ENCODE measurements at regions of chr5 and their contacts with region 1.

Region 1: DNA sequence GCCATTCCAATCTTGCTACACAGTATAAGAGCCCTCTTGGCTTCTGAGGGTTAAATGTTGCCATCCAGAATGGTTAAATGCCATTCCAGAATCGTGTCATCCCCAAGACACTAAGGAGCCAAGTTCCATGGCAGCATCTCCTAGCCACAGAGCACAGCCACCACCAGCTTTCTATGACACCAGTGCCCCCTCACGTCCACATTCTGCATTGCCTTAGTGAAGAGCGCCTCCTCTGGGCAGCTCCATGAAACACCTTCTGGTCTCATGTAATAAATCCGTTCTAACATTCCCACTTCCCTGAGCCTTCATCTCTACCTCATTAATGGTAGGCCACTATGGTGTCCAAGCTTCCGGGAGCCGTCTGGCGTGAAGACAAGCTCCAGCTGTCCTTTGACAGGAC is 12.4 kb downstream of the CBY3 start:
- DNase-seq: no peak
- ATAC-seq: peak; percentile 47 to 74
- H3K4me3 ChIP-seq: no peak overlapping the region
- H3K27ac ChIP-seq: no peak overlapping the region
- H3K4me1 ChIP-seq: no peaks in the 10 kb centered on the region
- H3K27me3 ChIP-seq: no peaks in the 10 kb centered on the region
- CTCF ChIP-seq: peak; percentile 28 to 59 (median 43)
- POLR2A ChIP-seq: no peak

Region 2: DNA sequence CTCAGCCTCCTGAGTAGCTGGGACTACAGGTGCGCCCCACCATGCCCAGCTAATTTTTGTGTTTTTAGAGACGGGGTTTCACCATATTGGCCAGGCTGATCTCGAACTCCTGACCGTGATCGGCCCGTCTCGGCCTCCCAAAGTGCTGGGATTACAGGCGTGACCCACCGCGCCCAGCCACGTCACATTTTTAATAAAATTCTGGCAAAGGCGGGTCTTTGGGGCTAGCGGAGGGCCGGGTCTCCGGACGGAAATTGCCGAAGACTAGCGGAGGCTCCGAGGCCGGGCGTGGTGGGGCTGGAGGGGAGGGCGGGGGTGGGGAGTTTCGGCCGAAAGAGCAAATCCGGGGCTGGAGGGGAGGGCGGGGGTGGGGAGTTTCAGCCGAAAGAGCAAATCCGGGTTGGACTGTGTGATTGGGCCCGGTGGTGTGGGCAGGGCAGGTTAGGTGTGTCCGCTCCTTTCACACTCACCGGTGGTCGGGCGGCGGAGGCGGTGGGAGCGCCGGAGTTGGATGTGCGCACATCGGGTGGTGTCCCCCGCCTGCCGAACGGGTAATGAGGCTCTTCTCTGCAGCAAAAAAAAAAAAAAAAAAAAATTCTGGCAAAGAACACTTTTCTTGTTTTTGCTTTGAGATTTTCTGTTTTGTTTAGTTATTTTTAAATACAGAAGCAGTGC is 91.0 kb before region 1 on chr5:
- in situ Hi-C with region 1: no loop called
- intact Hi-C with region 1: no loop called
- DNase-seq: no peak
- ATAC-seq: no peak
- H3K4me3 ChIP-seq: no peak overlapping the region
- H3K27ac ChIP-seq: no peak overlapping the region
- H3K4me1 ChIP-seq: no peaks in the 10 kb centered on the region
- H3K27me3 ChIP-seq: no peaks in the 10 kb centered on the region
- CTCF ChIP-seq: no peak
- POLR2A ChIP-seq: no peak

Region 3: GRCh38 chr5:179716286-179716685 is 47.9 kb after region 1 on chr5:
- in situ Hi-C with region 1: no loop called
- intact Hi-C with region 1: no loop called
- DNase-seq: no peak
- ATAC-seq: no peak
- H3K4me3 ChIP-seq: no peak overlapping the region
- H3K27ac ChIP-seq: no peak overlapping the region
- H3K4me1 ChIP-seq: no peaks in the 10 kb centered on the region
- H3K27me3 ChIP-seq: no peaks in the 10 kb centered on the region
- CTCF ChIP-seq: no peak
- POLR2A ChIP-seq: no peak

Region 4: DNA sequence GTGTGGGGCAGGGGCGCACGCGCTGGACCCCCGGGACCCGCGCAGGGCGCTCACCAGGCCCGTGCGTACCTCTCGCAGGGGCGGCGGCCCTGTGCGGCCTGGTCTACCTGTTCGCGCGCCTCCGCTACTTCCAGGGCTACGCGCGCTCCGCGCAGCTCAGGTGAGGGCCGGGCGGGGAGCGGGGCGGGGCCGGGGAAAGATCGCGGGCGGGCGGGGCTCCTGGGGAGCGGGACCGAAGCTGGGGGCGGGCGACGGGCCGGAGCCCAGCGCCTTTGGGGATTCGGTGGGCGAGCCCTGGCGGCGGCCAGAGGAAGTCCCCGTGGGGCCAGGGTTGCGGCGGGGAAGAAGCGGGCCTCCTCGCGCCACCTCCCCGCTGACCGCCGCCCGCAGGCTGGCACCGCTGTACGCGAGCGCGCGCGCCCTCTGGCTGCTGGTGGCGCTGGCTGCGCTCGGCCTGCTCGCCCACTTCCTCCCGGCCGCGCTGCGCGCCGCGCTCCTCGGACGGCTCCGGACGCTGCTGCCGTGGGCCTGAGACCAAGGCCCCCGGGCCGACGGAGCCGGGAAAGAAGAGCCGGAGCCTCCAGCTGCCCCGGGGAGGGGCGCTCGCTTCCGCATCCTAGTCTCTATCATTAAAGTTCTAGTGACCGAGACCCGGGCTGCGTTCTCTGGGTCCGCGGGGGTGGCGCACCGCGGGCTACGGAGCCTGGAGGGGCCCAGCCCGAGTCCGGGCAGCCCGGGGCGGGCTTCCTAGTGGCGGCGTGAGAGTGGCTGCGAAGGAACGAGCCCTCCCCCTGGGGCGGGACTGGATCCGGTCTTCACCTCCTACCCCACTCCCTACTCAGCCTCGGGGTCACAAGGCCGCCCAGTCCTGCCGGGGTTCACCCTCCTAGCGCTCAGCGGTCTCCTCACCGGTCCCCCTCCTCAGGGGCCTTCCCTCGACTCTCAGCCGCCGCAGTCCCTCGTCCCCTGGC is 127.8 kb after region 1 on chr5:
- in situ Hi-C with region 1: no loop called
- intact Hi-C with region 1: loop called (anchors 5 kb)
- DNase-seq: peak in 1 of 2 donors; percentile 68
- ATAC-seq: peak; percentile 74 to 84
- H3K4me3 ChIP-seq: peak overlapping the region; percentile 55 to 65 (median 60)
- H3K27ac ChIP-seq: peak overlapping the region; percentile 62 to 81 (median 76)
- H3K4me1 ChIP-seq: peaks cover 17 to 22% of the 10 kb centered on the region in 2 donors
- H3K27me3 ChIP-seq: no peaks in the 10 kb centered on the region
- CTCF ChIP-seq: peak; percentile 60 to 95 (median 84)
- POLR2A ChIP-seq: peak; percentile 45 to 46

Region 5: GRCh38 chr5:180343831-180344327 is 675.5 kb after region 1 on chr5:
- in situ Hi-C with region 1: no loop called
- intact Hi-C with region 1: no loop called
- DNase-seq: peak in 1 of 2 donors; percentile 49
- ATAC-seq: peak in 1 of 2 donors; percentile 33
- H3K4me3 ChIP-seq: no peak overlapping the region
- H3K27ac ChIP-seq: no peak overlapping the region
- H3K4me1 ChIP-seq: peaks cover 0 to 4% of the 10 kb centered on the region in 2 donors
- H3K27me3 ChIP-seq: no peaks in the 10 kb centered on the region
- CTCF ChIP-seq: no peak
- POLR2A ChIP-seq: no peak

Region 6: GRCh38 chr5:180494060-180494509 is 825.7 kb after region 1 on chr5 and contains the start of gene CNOT6:
- in situ Hi-C with region 1: loop called in 1 of 4 experiments (anchors 25 kb)
- intact Hi-C with region 1: no loop called
- DNase-seq: peak; percentile 80 to 87
- ATAC-seq: peak; percentile 92 to 94
- H3K4me3 ChIP-seq: peak within 1 kb of the TSS; percentile 69 to 93 (median 82)
- H3K27ac ChIP-seq: peak within 1 kb of the TSS; percentile 69 to 92 (median 80)
- H3K4me1 ChIP-seq: peaks cover 22 to 29% of the 10 kb centered on the region in 2 donors
- H3K27me3 ChIP-seq: no peaks in the 10 kb centered on the region
- CTCF ChIP-seq: no peak
- POLR2A ChIP-seq: peak; percentile 23 to 61
- total RNA-seq, gene CNOT6: 4.1 to 12.0 (median 6.4) TPM

Region 7: GRCh38 chr5:181217111-181217802 is 1548.9 kb after region 1 on chr5:
- in situ Hi-C with region 1: no loop called
- intact Hi-C with region 1: no loop called
- DNase-seq: peak in 1 of 2 donors; percentile 48
- ATAC-seq: peak in 1 of 2 donors; percentile 18
- H3K4me3 ChIP-seq: peak overlapping the region; percentile 54 to 60 (median 58)
- H3K27ac ChIP-seq: peak overlapping the region; percentile 65 to 79 (median 76)
- H3K4me1 ChIP-seq: peaks cover 22 to 28% of the 10 kb centered on the region in 2 donors
- H3K27me3 ChIP-seq: no peaks in the 10 kb centered on the region
- CTCF ChIP-seq: no peak
- POLR2A ChIP-seq: no peak